B cell (primary cell): ENCODE measurements at regions of chr1 and their contacts with region 1.

Region 1: DNA sequence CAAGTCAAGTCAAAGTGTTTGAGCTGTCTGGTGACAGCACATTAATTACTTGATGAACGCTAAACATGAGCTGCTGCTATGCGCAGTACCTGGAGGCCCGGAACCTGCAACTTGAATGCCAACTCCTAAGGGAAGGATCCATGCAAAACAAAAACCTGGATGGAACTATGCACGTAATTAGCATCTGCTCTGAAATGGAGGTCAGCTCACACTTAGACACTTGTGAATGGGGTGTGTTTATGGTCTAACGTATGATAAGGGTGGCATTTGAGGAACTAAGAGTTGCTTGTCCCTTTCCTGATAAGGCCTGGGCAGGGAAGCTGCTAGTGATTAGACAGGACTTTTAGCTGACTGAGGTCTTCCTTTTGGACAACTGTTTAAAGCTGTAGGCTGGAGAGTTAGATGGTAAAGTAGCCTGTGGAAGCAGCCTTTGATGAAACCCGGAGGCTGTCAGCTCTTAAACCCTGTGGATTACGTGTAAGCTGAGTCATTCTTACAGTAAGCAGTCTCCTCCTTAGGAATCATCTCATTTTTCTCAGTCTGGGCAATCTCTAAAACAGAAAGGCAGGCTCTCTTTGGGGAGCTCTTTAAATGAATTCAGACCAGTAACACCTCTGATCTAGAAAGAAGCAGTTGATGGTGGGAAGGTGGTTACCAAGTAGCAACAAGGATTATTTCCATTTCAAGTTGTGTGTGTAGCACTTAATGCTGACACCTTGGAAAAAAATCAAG is 6.8 kb downstream of the TENT5C start:
- DNase-seq: peak; percentile 56
- ATAC-seq: peak; percentile 31
- H3K4me3 ChIP-seq: peak overlapping the region in 1 of 5 experiments; percentile 23
- H3K4me3 Mint-ChIP-seq: peak overlapping the region; percentile 84
- H3K27ac ChIP-seq: peak overlapping the region; percentile 0 to 52
- H3K27ac Mint-ChIP-seq: peak overlapping the region; percentile 84
- H3K4me1 ChIP-seq: peaks cover 93 to 100% of the 10 kb centered on the region in 2 donors
- H3K4me1 Mint-ChIP-seq: peaks cover 95% of the 10 kb centered on the region
- H3K27me3 ChIP-seq: no peaks in the 10 kb centered on the region
- H3K27me3 Mint-ChIP-seq: no peaks in the 10 kb centered on the region
- CTCF ChIP-seq: no peak

Region 2: GRCh38 chr1:117586747-117587498 is 25.8 kb before region 1 on chr1:
- CTCF ChIA-PET with region 1: no interaction called
- POLR2A ChIA-PET with region 1: no interaction called
- intact Hi-C with region 1: no loop called
- DNase-seq: no peak
- ATAC-seq: no peak
- H3K4me3 ChIP-seq: no peak overlapping the region
- H3K4me3 Mint-ChIP-seq: no peak overlapping the region
- H3K27ac ChIP-seq: no peak overlapping the region
- H3K27ac Mint-ChIP-seq: no peak overlapping the region
- H3K4me1 ChIP-seq: no peaks in the 10 kb centered on the region
- H3K4me1 Mint-ChIP-seq: no peaks in the 10 kb centered on the region
- H3K27me3 ChIP-seq: peaks cover 0 to 3% (median 0%) of the 10 kb centered on the region in 4 experiments
- H3K27me3 Mint-ChIP-seq: peaks cover 5% of the 10 kb centered on the region
- CTCF ChIP-seq: no peak

Region 3: GRCh38 chr1:117638759-117639158 is 26.1 kb after region 1 on chr1:
- CTCF ChIA-PET with region 1: interaction called, 4 read pairs
- POLR2A ChIA-PET with region 1: interaction called, 13 read pairs
- intact Hi-C with region 1: no loop called
- DNase-seq: no peak
- ATAC-seq: no peak
- H3K4me3 ChIP-seq: no peak overlapping the region
- H3K4me3 Mint-ChIP-seq: no peak overlapping the region
- H3K27ac ChIP-seq: no peak overlapping the region
- H3K27ac Mint-ChIP-seq: no peak overlapping the region
- H3K4me1 ChIP-seq: peaks cover 67 to 68% of the 10 kb centered on the region in 2 donors
- H3K4me1 Mint-ChIP-seq: peaks cover 56% of the 10 kb centered on the region
- H3K27me3 ChIP-seq: no peaks in the 10 kb centered on the region
- H3K27me3 Mint-ChIP-seq: no peaks in the 10 kb centered on the region
- CTCF ChIP-seq: no peak